GM10248 (cell line): ENCODE measurements at regions of chr12 and their contacts with region 1.

Region 1: DNA sequence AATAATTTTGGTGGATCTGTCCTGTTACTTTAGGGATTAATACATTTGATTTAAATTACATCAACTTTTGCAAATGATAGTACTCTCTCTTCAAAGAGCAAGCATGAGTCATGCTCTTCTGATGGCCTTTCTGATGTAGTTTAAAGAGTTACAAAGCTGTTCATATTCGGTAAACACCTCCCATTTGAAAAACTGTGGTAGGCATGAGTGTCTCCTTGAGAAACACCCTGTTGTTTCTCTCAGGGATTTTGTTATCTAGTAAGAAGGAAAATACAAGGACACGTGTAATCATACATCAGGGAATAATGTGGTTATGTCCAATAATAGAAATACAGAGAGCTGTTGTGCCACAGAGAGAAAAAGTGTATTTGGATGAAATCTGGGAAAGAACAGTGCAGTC is 53.3 kb upstream of the E2F7 start:
- DNase-seq: no peak
- CTCF ChIP-seq: no peak

Region 2: DNA sequence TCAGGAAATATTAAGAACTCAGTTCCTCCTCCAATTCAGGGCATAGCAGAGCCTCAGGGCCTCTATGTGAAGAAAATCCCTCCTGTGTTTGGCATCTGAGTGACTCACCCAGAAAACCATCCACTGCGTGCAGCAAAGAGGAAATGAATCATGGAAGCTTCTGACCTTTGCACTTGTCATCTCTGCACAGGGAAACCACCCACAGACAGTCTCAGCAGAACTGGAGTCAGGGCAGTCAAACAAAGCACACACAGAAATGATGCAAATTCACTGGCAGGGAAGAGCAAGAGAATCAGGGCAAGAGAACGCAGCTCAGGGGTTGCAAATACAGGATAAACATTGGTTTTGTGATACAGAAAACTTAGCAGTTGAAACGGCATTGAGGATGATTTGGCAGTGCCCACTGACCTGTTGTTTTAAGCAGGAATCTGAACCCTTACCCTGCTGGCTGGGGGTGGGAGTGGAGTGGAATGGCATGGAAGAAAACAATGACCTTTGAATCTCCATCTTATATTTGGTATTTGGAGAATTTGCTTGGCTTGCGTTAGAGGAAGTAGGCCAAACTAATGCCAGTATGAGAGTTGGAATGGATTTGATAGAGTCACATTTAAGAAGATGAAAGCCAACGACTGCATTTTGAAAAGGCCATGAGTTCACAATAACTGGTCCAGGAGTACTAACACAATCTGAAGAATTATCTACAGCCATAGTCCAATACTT is 1140.6 kb before region 1 on chr12:
- CTCF ChIA-PET with region 1: no interaction called
- POLR2A ChIA-PET with region 1: no interaction called
- DNase-seq: peak; percentile 75
- CTCF ChIP-seq: no peak

Region 3: GRCh38 chr12:77107121-77107520 is 11.6 kb before region 1 on chr12:
- CTCF ChIA-PET with region 1: interaction called, 11 read pairs
- POLR2A ChIA-PET with region 1: no interaction called
- DNase-seq: no peak
- CTCF ChIP-seq: no peak